Panc1 (cell line): ENCODE measurements at regions of chr5 and their contacts with region 1.

Region 1: GRCh38 chr5:160021831-160022446 is 13.0 kb downstream of the TTC1 start:
- DNase-seq: peak; percentile 43
- ATAC-seq: peak; percentile 92
- H3K4me3 ChIP-seq: no peak overlapping the region
- H3K27ac ChIP-seq: no peak overlapping the region
- H3K4me1 ChIP-seq: peaks cover 4% of the 10 kb centered on the region; the same call in 1 of the 2 replicates
- H3K27me3 ChIP-seq: no peaks in the 10 kb centered on the region
- CTCF ChIP-seq: peak; percentile 88

Region 2: DNA sequence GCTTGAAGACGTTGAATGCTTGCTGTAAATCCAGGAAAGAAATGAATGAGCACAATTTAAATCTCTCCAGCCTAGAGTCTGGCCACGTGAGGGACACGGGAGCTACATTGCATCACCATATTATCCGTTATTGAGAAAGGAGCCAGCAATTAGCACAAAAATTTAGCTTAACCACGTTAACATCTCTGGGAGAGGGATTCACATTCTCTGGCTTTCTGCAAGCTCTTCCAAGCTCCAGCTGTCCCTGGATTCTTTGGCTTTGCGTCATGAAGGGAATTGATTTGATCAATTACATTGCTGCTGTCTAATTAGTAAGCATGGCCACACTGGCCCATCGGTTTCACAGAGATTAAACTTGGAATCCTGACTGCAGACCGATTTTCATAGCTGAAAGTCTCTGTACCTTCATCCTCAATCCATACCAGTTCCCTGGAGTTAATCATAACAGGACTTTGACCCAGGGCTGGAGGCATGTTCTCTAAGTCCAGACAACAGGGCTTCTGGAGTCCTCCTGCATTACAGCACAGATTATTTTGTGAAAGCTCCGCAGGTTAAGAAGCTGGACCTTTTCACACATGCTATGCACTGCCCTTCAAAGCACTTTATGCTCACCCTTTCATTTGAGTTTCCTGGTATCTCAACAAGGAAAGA is 74.1 kb before region 1 on chr5:
- CTCF ChIA-PET with region 1: no interaction called
- POLR2A ChIA-PET with region 1: no interaction called
- in situ Hi-C with region 1: no loop called
- intact Hi-C with region 1: no loop called
- DNase-seq: no peak
- ATAC-seq: no peak
- H3K4me3 ChIP-seq: no peak overlapping the region
- H3K27ac ChIP-seq: no peak overlapping the region
- H3K4me1 ChIP-seq: no peaks in the 10 kb centered on the region
- H3K27me3 ChIP-seq: no peaks in the 10 kb centered on the region
- CTCF ChIP-seq: no peak

Region 3: GRCh38 chr5:160008877-160009590 is 12.9 kb before region 1 on chr5 and contains the start of gene TTC1:
- CTCF ChIA-PET with region 1: interaction called, 12 read pairs
- POLR2A ChIA-PET with region 1: no interaction called
- in situ Hi-C with region 1: no loop called
- intact Hi-C with region 1: no loop called
- DNase-seq: peak; percentile 98
- ATAC-seq: peak; percentile 100
- H3K4me3 ChIP-seq: peak within 1 kb of the TSS; percentile 94 to 98
- H3K27ac ChIP-seq: peak within 1 kb of the TSS; percentile 96
- H3K4me1 ChIP-seq: peaks cover 15% of the 10 kb centered on the region
- H3K27me3 ChIP-seq: no peaks in the 10 kb centered on the region
- CTCF ChIP-seq: no peak
- total RNA-seq, gene TTC1: 67.6 TPM

Region 4: GRCh38 chr5:160342403-160342941 is 320.5 kb after region 1 on chr5:
- CTCF ChIA-PET with region 1: no interaction called
- POLR2A ChIA-PET with region 1: no interaction called
- in situ Hi-C with region 1: no loop called
- intact Hi-C with region 1: loop called (anchors 5 kb)
- DNase-seq: no peak
- ATAC-seq: no peak; the same call in 1 of the 2 replicates
- H3K4me3 ChIP-seq: no peak overlapping the region
- H3K27ac ChIP-seq: no peak overlapping the region; the same call in 1 of the 2 replicates
- H3K4me1 ChIP-seq: peaks cover 4% of the 10 kb centered on the region
- H3K27me3 ChIP-seq: no peaks in the 10 kb centered on the region
- CTCF ChIP-seq: no peak

Region 5: GRCh38 chr5:160390787-160391696 is 369.1 kb after region 1 on chr5:
- CTCF ChIA-PET with region 1: interaction called, 25 read pairs
- POLR2A ChIA-PET with region 1: no interaction called
- in situ Hi-C with region 1: no loop called
- intact Hi-C with region 1: loop called (anchors 5 kb)
- DNase-seq: no peak
- ATAC-seq: no peak
- H3K4me3 ChIP-seq: no peak overlapping the region
- H3K27ac ChIP-seq: no peak overlapping the region
- H3K4me1 ChIP-seq: no peaks in the 10 kb centered on the region
- H3K27me3 ChIP-seq: no peaks in the 10 kb centered on the region
- CTCF ChIP-seq: peak; percentile 65; the same call in 1 of the 2 replicates

Region 6: GRCh38 chr5:160427607-160428006 is 405.7 kb after region 1 on chr5:
- CTCF ChIA-PET with region 1: interaction called, 19 read pairs
- POLR2A ChIA-PET with region 1: no interaction called
- in situ Hi-C with region 1: no loop called
- intact Hi-C with region 1: no loop called
- DNase-seq: no peak
- ATAC-seq: no peak
- H3K4me3 ChIP-seq: no peak overlapping the region
- H3K27ac ChIP-seq: no peak overlapping the region
- H3K4me1 ChIP-seq: peaks cover 21% of the 10 kb centered on the region
- H3K27me3 ChIP-seq: no peaks in the 10 kb centered on the region
- CTCF ChIP-seq: no peak